ENCODE measurements at regions of chr17 and their contacts with region 1.

Region 1: GRCh38 chr17:49414622-49415350 is at the start of gene PHB1:
- DNase-seq: peak; percentile 96
- CTCF ChIP-seq: no peak

Region 2: GRCh38 chr17:48830840-48831548 is 583.8 kb before region 1 on chr17 and contains the start of gene CALCOCO2:
- in situ Hi-C with region 1: no loop called
- DNase-seq: peak; percentile 97
- CTCF ChIP-seq: no peak

Region 3: GRCh38 chr17:49316889-49317675 is 97.7 kb before region 1 on chr17:
- in situ Hi-C with region 1: no loop called
- DNase-seq: no peak
- CTCF ChIP-seq: no peak

Region 4: GRCh38 chr17:49677933-49678847 is 263.4 kb after region 1 on chr17 and contains the start of gene SPOP:
- in situ Hi-C with region 1: loop called (anchors 25 kb)
- DNase-seq: peak; percentile 99
- CTCF ChIP-seq: no peak